HepG2 (cell line): ENCODE measurements at regions of chr5 and their contacts with region 1.

Region 1: GRCh38 chr5:109099081-109099480 is 310.7 kb downstream of the PJA2 start:
- DNase-seq: no peak
- ATAC-seq: no peak
- H3K4me3 ChIP-seq: no peak overlapping the region
- H3K27ac ChIP-seq: no peak overlapping the region
- H3K4me1 ChIP-seq: no peaks in the 10 kb centered on the region
- H3K27me3 ChIP-seq: no peaks in the 10 kb centered on the region
- CTCF ChIP-seq: no peak
- EP300 ChIP-seq: no peak
- POLR2A ChIP-seq: no peak
- RAD21 ChIP-seq: no peak

Region 2: DNA sequence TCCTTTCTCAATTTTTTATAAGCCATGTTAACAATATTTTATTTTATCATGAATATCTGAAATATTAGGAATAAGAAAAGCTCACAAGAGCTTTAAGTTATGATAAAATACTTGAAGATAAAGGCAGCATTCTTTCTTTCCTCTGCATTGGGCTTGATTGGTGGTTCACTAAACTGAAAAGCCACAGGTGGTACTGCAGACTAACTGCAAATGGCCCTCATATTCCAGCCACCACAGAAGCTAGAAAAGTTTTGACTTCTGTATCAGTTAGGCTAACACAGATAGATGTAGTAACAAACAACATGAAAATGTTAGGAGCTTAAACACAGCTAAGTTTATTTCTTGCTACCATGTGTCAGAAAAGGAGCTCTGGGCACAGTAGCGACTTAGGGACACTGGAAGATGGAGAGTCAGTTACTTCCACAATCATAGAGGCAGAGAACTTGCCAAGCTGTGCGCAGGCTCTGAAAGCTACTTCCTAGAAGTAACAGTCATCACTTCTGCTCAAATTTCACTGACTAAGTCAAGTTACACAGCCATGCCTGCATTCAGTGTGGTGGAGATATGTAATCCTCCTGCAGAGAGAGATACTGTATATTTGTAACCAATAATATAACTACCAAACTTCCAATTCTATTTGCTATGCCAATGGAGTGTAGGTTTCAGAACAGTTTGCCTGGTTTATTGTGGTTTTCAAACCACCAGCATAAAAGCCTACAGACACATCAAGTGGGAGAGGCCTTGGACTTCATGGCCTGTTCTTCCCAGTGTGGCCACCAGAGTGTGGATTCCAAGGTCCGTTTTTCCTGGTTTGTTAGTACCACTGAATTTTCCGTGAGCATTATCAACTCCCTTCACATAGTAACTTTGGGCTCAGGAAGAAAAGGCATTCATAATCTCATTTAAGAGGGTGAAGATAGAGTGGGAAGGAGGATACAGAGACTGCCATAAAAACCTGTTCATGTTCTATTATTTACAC is 42.4 kb after region 1 on chr5:
- CTCF ChIA-PET with region 1: no interaction called
- POLR2A ChIA-PET with region 1: no interaction called
- in situ Hi-C with region 1: no loop called
- intact Hi-C with region 1: loop called (anchors 1 kb)
- DNase-seq: no peak
- ATAC-seq: peak; percentile 87
- H3K4me3 ChIP-seq: no peak overlapping the region
- H3K27ac ChIP-seq: no peak overlapping the region
- H3K4me1 ChIP-seq: peaks cover 7% of the 10 kb centered on the region; the same call in 1 of the 2 replicates
- H3K27me3 ChIP-seq: no peaks in the 10 kb centered on the region
- CTCF ChIP-seq: 0 out of 2 replicates have a peak, but pooled peaks have one; percentile 10
- EP300 ChIP-seq: no peak
- POLR2A ChIP-seq: no peak
- RAD21 ChIP-seq: no peak

Region 3: GRCh38 chr5:109580225-109581015 is 481.3 kb after region 1 on chr5:
- CTCF ChIA-PET with region 1: no interaction called
- POLR2A ChIA-PET with region 1: no interaction called
- in situ Hi-C with region 1: no loop called
- intact Hi-C with region 1: no loop called
- DNase-seq: no peak
- ATAC-seq: no peak
- H3K4me3 ChIP-seq: no peak overlapping the region
- H3K27ac ChIP-seq: no peak overlapping the region
- H3K4me1 ChIP-seq: no peaks in the 10 kb centered on the region
- H3K27me3 ChIP-seq: no peaks in the 10 kb centered on the region
- CTCF ChIP-seq: no peak
- EP300 ChIP-seq: no peak
- POLR2A ChIP-seq: no peak
- RAD21 ChIP-seq: no peak